Psoas muscle (tissue), 8 donors: ENCODE measurements at regions of chr6 and their contacts with region 1.

Region 1: GRCh38 chr6:90216072-90216977 is 80.3 kb downstream of the BACH2 start:
- DNase-seq: no peak
- ATAC-seq: no peak
- H3K4me3 ChIP-seq: no peak overlapping the region
- H3K27ac ChIP-seq: peak overlapping the region; percentile 96
- H3K4me1 ChIP-seq: peaks cover 48% of the 10 kb centered on the region
- H3K27me3 ChIP-seq: no peaks in the 10 kb centered on the region
- CTCF ChIP-seq: no peak

Region 2: DNA sequence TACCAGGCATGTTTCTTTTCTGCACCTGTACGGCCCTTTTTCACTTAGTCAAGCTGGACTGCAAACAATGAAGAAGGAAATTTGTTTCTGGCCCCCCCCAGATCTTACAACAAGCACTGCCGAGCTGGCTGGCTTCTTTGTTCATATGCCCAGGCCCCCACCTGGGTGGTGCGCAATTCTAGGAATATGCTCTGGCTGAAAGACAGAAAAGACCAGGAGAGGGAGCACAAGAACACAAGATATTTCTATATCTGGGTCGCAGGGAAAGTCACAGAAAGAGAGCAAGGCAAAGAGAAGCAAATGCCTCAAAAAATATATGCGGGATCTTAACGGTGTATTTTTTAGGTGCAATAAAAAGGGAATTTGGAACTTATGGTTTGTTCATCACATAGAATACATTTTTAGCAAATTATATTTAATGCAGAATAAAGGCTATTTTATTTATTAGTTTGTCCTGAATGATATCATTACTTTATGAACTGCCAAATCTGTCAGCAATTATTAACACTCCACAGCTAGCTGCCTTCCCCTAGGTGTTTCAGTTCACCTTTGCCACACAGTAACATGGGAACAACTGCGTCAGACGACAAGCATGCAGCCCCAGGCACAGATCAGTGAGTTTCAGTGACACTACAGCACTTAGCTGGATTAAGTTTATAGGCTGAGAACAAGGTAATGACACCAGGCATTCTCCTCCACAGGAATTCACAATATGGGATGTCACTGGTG is 245.6 kb before region 1 on chr6:
- intact Hi-C with region 1: loop called in 1 of 2 experiments (anchors 10 kb)
- DNase-seq: peak; percentile 23 to 54
- ATAC-seq: peak; percentile 43 to 84 (median 65)
- H3K4me3 ChIP-seq: no peak overlapping the region
- H3K27ac ChIP-seq: no peak overlapping the region
- H3K4me1 ChIP-seq: peaks cover 32% of the 10 kb centered on the region
- H3K27me3 ChIP-seq: no peaks in the 10 kb centered on the region
- CTCF ChIP-seq: peak; percentile 57

Region 3: DNA sequence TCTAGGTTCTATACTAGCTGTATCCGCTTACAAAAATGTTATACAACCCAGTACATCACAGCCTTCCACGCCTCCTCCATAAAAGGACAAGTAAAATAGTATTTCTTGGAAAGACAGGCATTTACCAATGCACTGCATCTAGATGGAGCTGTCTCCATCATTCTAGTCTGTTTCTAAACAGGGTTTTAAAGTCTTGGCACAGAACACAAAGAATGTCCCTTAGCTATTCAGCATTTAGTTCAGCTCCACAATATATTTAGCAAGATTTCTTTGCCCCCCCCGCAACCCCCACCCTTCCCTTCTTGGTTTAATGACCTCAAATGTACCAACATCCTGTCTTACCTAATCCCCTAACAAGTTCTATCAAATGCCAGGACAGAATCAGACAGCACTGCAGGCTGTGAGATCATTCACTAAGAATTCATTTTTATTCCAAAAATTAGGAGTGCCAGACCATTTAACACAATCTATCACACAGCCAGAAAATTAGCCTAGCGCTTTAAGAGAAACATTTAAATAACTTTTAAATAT is 118.3 kb before region 1 on chr6:
- intact Hi-C with region 1: loop called in 1 of 2 experiments (anchors 2 kb)
- DNase-seq: peak; percentile 81 to 82
- ATAC-seq: peak; percentile 87 to 91 (median 88)
- H3K4me3 ChIP-seq: no peak overlapping the region
- H3K27ac ChIP-seq: peak overlapping the region; percentile 86
- H3K4me1 ChIP-seq: peaks cover 39% of the 10 kb centered on the region
- H3K27me3 ChIP-seq: no peaks in the 10 kb centered on the region
- CTCF ChIP-seq: peak; percentile 37

Region 4: GRCh38 chr6:90135667-90136066 is 80.7 kb before region 1 on chr6:
- intact Hi-C with region 1: loop called in 1 of 2 experiments (anchors 2 kb)
- DNase-seq: peak in 1 of 2 donors; percentile 40
- ATAC-seq: peak; percentile 62 to 89 (median 70)
- H3K4me3 ChIP-seq: peak overlapping the region; percentile 15
- H3K27ac ChIP-seq: peak overlapping the region; percentile 86
- H3K4me1 ChIP-seq: peaks cover 50% of the 10 kb centered on the region
- H3K27me3 ChIP-seq: no peaks in the 10 kb centered on the region
- CTCF ChIP-seq: no peak

Region 5: GRCh38 chr6:90285611-90286381 is 69.5 kb after region 1 on chr6:
- intact Hi-C with region 1: loop called in 1 of 2 experiments (anchors 2 kb)
- DNase-seq: peak; percentile 82 to 92
- ATAC-seq: peak; percentile 97 to 99 (median 98)
- H3K4me3 ChIP-seq: peak overlapping the region; percentile 59
- H3K27ac ChIP-seq: peak overlapping the region; percentile 97
- H3K4me1 ChIP-seq: peaks cover 62% of the 10 kb centered on the region
- H3K27me3 ChIP-seq: no peaks in the 10 kb centered on the region
- CTCF ChIP-seq: no peak

Region 6: GRCh38 chr6:90478789-90479602 is 262.7 kb after region 1 on chr6:
- intact Hi-C with region 1: loop called in 1 of 2 experiments (anchors 10 kb)
- DNase-seq: peak; percentile 90 to 94
- ATAC-seq: peak; percentile 100
- H3K4me3 ChIP-seq: no peak overlapping the region
- H3K27ac ChIP-seq: peak overlapping the region; percentile 51
- H3K4me1 ChIP-seq: peaks cover 9% of the 10 kb centered on the region
- H3K27me3 ChIP-seq: no peaks in the 10 kb centered on the region
- CTCF ChIP-seq: peak; percentile 97